PC-3 (cell line): ENCODE measurements at regions of chr4 and their contacts with region 1.

Region 1: GRCh38 chr4:119212234-119212963 is at the start of gene USP53:
- DNase-seq: peak; percentile 97
- ATAC-seq: peak; percentile 84
- H3K4me3 ChIP-seq: peak within 1 kb of the TSS; percentile 89
- H3K27ac ChIP-seq: peak within 1 kb of the TSS; percentile 79
- H3K4me1 ChIP-seq: peaks cover 28% of the 10 kb centered on the region
- H3K27me3 ChIP-seq: no peaks in the 10 kb centered on the region
- CTCF ChIP-seq: no peak
- total RNA-seq, gene USP53: 8.7 and 9.6 TPM in 2 replicates

Region 2: DNA sequence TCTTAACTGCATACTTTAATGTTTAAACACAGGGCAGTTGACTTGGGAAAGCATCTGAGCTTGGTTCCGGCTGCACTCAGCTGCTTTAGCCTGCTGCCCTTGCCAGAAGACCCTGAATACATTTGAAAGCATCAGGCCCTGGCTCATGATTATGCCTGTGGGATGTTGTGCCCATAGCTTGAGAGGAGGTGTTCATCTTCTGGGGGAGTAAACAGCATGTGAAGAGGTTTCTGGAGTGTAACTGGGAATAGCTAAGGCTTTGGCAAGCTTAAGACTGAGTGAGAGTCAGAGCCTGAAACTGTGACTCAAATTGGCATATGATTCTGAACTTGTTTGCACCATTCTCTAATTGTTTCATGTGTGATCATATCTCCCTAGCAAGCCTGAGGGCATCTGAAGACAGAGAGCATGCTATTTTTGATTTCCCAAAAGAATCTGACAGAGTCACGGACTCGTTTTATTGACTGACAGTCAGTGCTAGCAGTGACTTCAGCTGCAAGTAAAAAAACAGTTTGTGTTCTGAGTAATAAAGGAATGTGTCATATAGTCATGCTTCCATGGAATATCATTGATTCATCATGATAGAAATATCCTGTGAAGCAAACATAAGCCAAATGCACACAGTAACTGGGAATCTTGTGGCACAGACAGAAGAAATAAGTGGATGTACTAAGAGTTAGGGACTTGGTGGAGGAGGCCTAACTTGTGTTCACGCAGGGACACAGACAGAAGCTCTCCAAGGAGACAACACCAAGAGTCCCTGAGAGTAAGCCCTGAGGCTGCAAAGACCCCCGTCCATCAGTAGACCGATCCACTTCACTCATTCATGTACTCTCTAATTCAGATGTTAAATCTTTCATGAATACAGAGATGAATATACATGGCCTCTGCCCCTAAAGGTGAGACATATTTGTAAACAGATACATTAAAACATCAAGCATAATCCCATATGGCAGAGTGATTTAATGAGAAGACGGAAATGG is 223.0 kb before region 1 on chr4:
- CTCF ChIA-PET with region 1: no interaction called
- POLR2A ChIA-PET with region 1: no interaction called
- intact Hi-C with region 1: loop called (anchors 1 kb)
- DNase-seq: peak; percentile 94
- ATAC-seq: peak; percentile 88
- H3K4me3 ChIP-seq: no peak overlapping the region
- H3K27ac ChIP-seq: peak overlapping the region; percentile 95
- H3K4me1 ChIP-seq: peaks cover 30% of the 10 kb centered on the region
- H3K27me3 ChIP-seq: no peaks in the 10 kb centered on the region
- CTCF ChIP-seq: no peak

Region 3: GRCh38 chr4:119087121-119087520 is 125.3 kb before region 1 on chr4:
- CTCF ChIA-PET with region 1: no interaction called
- POLR2A ChIA-PET with region 1: no interaction called
- intact Hi-C with region 1: loop called (anchors 2 kb)
- DNase-seq: peak; percentile 2
- ATAC-seq: 0 out of 2 replicates have a peak, but pooled peaks have one; percentile 24
- H3K4me3 ChIP-seq: no peak overlapping the region
- H3K27ac ChIP-seq: no peak overlapping the region
- H3K4me1 ChIP-seq: no peaks in the 10 kb centered on the region
- H3K27me3 ChIP-seq: no peaks in the 10 kb centered on the region
- CTCF ChIP-seq: peak; percentile 44; the same call in 1 of the 2 replicates

Region 4: GRCh38 chr4:119118397-119118796 is 94.0 kb before region 1 on chr4:
- CTCF ChIA-PET with region 1: no interaction called
- POLR2A ChIA-PET with region 1: no interaction called
- intact Hi-C with region 1: no loop called
- DNase-seq: no peak
- ATAC-seq: no peak
- H3K4me3 ChIP-seq: no peak overlapping the region
- H3K27ac ChIP-seq: no peak overlapping the region
- H3K4me1 ChIP-seq: peaks cover 6% of the 10 kb centered on the region; the same call in 1 of the 2 replicates
- H3K27me3 ChIP-seq: no peaks in the 10 kb centered on the region
- CTCF ChIP-seq: no peak

Region 5: DNA sequence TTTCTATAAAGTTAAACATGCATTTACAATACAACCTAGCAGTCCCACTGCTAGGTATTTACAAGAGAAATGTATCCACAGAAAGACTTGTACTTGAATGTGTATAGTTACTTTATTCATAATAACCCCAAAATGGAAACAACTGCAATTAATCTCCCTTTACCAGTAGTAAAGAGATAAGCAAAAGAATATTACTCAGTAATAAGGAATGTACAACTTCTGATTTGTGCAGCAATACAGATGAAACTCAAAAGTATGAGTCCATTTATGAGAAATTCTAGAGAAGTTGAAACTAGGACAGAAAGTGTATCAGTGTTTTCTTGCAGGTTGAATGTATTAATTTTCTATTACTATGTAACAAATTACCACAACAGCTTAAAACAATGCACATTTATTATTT is 15.3 kb after region 1 on chr4:
- CTCF ChIA-PET with region 1: no interaction called
- POLR2A ChIA-PET with region 1: no interaction called
- intact Hi-C with region 1: no loop called
- DNase-seq: no peak
- ATAC-seq: no peak
- H3K4me3 ChIP-seq: no peak overlapping the region
- H3K27ac ChIP-seq: no peak overlapping the region
- H3K4me1 ChIP-seq: no peaks in the 10 kb centered on the region
- H3K27me3 ChIP-seq: no peaks in the 10 kb centered on the region
- CTCF ChIP-seq: no peak

Region 6: GRCh38 chr4:119286377-119287002 is 74.1 kb after region 1 on chr4:
- CTCF ChIA-PET with region 1: no interaction called
- POLR2A ChIA-PET with region 1: no interaction called
- intact Hi-C with region 1: loop called (anchors 5 kb)
- DNase-seq: peak; percentile 62
- ATAC-seq: no peak
- H3K4me3 ChIP-seq: no peak overlapping the region
- H3K27ac ChIP-seq: no peak overlapping the region
- H3K4me1 ChIP-seq: 0 out of 2 replicates have a peak, but pooled peaks cover 7% of the 10 kb centered on the region
- H3K27me3 ChIP-seq: no peaks in the 10 kb centered on the region
- CTCF ChIP-seq: peak; percentile 65